ENCODE measurements at regions of chr15 and their contacts with region 1.

Region 1: DNA sequence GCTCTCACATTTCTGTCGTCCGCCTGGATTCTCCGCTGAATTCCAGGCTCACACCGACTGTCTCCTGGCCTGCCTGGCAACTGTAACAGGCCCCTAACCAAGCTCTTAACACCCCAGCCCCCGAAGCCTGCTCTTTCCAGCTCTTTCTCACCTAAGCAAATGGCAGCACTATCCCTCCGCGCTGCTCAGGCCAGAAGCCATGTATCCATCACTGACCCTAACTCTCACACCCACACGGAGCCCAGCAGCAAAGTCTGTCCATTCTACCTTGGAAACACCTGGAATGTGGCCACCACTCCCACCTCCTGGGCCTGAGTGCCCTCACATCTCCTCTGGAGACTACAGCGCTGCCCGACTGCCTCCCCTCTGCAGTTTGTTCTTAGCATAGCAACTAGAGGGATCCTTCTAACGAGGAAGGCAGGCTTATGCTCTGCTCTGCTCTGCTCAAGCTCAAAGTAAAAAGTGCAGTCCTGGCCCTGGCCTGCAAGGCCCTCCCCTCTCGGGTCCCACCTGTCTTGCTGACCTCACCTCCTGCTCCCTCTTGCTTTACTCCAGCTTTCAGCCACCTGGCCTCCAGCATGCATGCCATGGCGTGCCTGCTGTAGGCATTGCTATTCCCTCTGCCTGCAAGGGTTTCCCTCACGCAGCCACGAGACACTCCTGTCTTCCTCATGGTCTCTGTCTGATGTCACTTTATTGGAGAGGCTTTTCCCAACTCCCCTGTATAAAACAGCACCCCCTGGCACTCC is 27.2 kb downstream of the FEM1B start:
- DNase-seq: no peak
- ATAC-seq: no peak
- H3K4me3 Mint-ChIP-seq: no peak overlapping the region
- H3K27ac Mint-ChIP-seq: no peak overlapping the region
- H3K4me1 Mint-ChIP-seq: peaks cover 17% of the 10 kb centered on the region
- H3K27me3 Mint-ChIP-seq: peaks cover 1% of the 10 kb centered on the region
- CTCF ChIP-seq: no peak

Region 2: GRCh38 chr15:68277603-68278344 is 27.0 kb before region 1 on chr15 and contains the start of gene FEM1B:
- CTCF ChIA-PET with region 1: interaction called, 17 read pairs
- POLR2A ChIA-PET with region 1: interaction called, 4 read pairs
- intact Hi-C with region 1: no loop called
- DNase-seq: peak; percentile 90
- ATAC-seq: peak; percentile 81
- H3K4me3 Mint-ChIP-seq: peak within 1 kb of the TSS; percentile 93
- H3K27ac Mint-ChIP-seq: peak within 1 kb of the TSS; percentile 98
- H3K4me1 Mint-ChIP-seq: peaks cover 38% of the 10 kb centered on the region
- H3K27me3 Mint-ChIP-seq: no peaks in the 10 kb centered on the region
- CTCF ChIP-seq: no peak
- total RNA-seq, gene FEM1B: 37.1 to 44.4 TPM

Region 3: DNA sequence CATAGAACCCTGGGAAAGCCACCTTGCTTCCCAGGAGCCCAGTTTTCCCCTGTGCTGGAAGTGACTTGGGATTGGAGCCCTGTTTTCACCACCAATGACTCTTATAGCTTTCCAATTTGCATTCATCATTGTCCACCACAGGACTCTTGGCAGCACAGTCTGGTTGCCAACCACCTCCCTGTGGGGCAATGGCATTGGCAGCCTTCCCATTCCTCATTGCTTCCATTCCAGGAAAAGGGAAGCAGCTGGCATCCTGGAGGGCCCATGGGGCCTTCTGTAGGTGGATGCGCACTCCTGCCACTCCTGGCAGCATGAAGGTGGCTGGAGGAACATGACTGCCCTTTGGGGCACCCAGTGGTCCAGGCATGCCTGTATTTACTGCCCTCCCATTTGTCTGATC is 30.5 kb after region 1 on chr15:
- CTCF ChIA-PET with region 1: interaction called, 13 read pairs
- POLR2A ChIA-PET with region 1: no interaction called
- intact Hi-C with region 1: no loop called
- DNase-seq: no peak
- ATAC-seq: no peak
- H3K4me3 Mint-ChIP-seq: no peak overlapping the region
- H3K27ac Mint-ChIP-seq: no peak overlapping the region
- H3K4me1 Mint-ChIP-seq: no peaks in the 10 kb centered on the region
- H3K27me3 Mint-ChIP-seq: peaks cover 2% of the 10 kb centered on the region
- CTCF ChIP-seq: no peak

Region 4: GRCh38 chr15:68352401-68353062 is 47.8 kb after region 1 on chr15:
- CTCF ChIA-PET with region 1: interaction called, 12 read pairs
- POLR2A ChIA-PET with region 1: no interaction called
- intact Hi-C with region 1: no loop called
- DNase-seq: peak; percentile 77
- ATAC-seq: peak; percentile 72
- H3K4me3 Mint-ChIP-seq: no peak overlapping the region
- H3K27ac Mint-ChIP-seq: peak overlapping the region; percentile 91
- H3K4me1 Mint-ChIP-seq: peaks cover 31% of the 10 kb centered on the region
- H3K27me3 Mint-ChIP-seq: peaks cover 6% of the 10 kb centered on the region
- CTCF ChIP-seq: no peak

Region 5: GRCh38 chr15:68383161-68384074 is 78.7 kb after region 1 on chr15:
- CTCF ChIA-PET with region 1: interaction called, 59 read pairs
- POLR2A ChIA-PET with region 1: interaction called, 7 read pairs
- intact Hi-C with region 1: loop called (anchors 1 kb)
- DNase-seq: peak; percentile 58
- ATAC-seq: peak; percentile 91
- H3K4me3 Mint-ChIP-seq: no peak overlapping the region
- H3K27ac Mint-ChIP-seq: no peak overlapping the region
- H3K4me1 Mint-ChIP-seq: peaks cover 8% of the 10 kb centered on the region
- H3K27me3 Mint-ChIP-seq: no peaks in the 10 kb centered on the region
- CTCF ChIP-seq: peak; percentile 76

Region 6: GRCh38 chr15:68537107-68537905 is 232.5 kb after region 1 on chr15:
- CTCF ChIA-PET with region 1: interaction called, 15 read pairs
- POLR2A ChIA-PET with region 1: no interaction called
- intact Hi-C with region 1: no loop called
- DNase-seq: no peak
- ATAC-seq: no peak
- H3K4me3 Mint-ChIP-seq: no peak overlapping the region
- H3K27ac Mint-ChIP-seq: no peak overlapping the region
- H3K4me1 Mint-ChIP-seq: no peaks in the 10 kb centered on the region
- H3K27me3 Mint-ChIP-seq: peaks cover 12% of the 10 kb centered on the region
- CTCF ChIP-seq: no peak

Region 7: GRCh38 chr15:68672781-68673205 is 368.0 kb after region 1 on chr15:
- CTCF ChIA-PET with region 1: interaction called, 13 read pairs
- POLR2A ChIA-PET with region 1: no interaction called
- intact Hi-C with region 1: no loop called
- DNase-seq: no peak
- ATAC-seq: no peak
- H3K4me3 Mint-ChIP-seq: no peak overlapping the region
- H3K27ac Mint-ChIP-seq: no peak overlapping the region
- H3K4me1 Mint-ChIP-seq: peaks cover 3% of the 10 kb centered on the region
- H3K27me3 Mint-ChIP-seq: peaks cover 7% of the 10 kb centered on the region
- CTCF ChIP-seq: no peak